CD8-positive, alpha-beta T cell (primary cell): ENCODE measurements at regions of chr11 and their contacts with region 1.

Region 1: DNA sequence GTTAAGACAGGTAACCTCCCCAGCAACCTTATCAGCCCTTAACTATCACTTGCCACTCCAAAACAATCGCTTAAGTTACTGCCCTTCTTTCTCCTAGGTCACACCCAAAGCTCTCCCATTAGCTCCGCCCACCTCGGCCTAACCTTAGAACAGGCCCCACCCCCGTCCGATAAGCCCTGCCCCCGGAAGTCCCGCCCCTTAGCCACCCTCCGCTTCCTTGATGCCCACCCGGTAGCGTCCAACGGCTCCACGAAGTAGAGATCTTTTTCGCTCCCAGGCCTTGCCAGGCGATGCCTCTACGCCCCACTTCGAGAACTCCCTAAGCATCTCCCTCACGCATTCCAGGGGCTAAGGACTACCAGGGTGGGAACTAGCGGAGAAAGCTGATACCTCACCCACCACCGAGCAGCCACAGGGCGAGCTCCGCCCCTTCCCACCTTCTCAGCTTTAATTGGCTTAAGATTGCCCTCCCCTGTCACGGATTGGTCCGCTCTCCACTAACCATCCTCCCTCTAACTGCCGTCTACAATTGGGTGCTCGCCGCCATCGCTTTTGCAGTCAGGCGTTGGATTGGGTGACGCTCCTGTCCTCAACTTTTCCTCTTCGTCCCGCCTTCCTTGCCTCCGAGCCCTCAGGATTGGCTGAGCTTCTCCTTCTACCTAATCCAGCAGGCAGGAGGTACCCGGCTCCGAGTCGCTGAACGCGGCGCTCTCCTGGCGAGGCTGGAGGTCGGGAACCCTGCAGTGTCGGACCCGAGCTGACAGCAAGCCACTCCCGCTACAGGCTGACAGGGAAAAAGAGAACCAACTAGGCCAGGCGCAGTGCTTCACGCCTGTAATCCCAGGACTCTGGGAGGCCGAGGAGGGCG is at the start of gene ZBTB3:
- DNase-seq: peak; percentile 93 to 100 (median 96)
- ATAC-seq: peak; percentile 93
- H3K4me3 ChIP-seq: peak within 1 kb of the TSS; percentile 72 to 88
- H3K4me3 Mint-ChIP-seq: peak within 1 kb of the TSS; percentile 99
- H3K27ac ChIP-seq: peak within 1 kb of the TSS; percentile 64 to 91
- H3K27ac Mint-ChIP-seq: peak within 1 kb of the TSS; percentile 98
- H3K4me1 ChIP-seq: peaks cover 28% of the 10 kb centered on the region
- H3K4me1 Mint-ChIP-seq: peaks cover 32% of the 10 kb centered on the region
- H3K27me3 ChIP-seq: no peaks in the 10 kb centered on the region
- H3K27me3 Mint-ChIP-seq: no peaks in the 10 kb centered on the region
- CTCF ChIP-seq: no peak
- total RNA-seq, gene ZBTB3: 3.7 to 4.8 TPM

Region 2: DNA sequence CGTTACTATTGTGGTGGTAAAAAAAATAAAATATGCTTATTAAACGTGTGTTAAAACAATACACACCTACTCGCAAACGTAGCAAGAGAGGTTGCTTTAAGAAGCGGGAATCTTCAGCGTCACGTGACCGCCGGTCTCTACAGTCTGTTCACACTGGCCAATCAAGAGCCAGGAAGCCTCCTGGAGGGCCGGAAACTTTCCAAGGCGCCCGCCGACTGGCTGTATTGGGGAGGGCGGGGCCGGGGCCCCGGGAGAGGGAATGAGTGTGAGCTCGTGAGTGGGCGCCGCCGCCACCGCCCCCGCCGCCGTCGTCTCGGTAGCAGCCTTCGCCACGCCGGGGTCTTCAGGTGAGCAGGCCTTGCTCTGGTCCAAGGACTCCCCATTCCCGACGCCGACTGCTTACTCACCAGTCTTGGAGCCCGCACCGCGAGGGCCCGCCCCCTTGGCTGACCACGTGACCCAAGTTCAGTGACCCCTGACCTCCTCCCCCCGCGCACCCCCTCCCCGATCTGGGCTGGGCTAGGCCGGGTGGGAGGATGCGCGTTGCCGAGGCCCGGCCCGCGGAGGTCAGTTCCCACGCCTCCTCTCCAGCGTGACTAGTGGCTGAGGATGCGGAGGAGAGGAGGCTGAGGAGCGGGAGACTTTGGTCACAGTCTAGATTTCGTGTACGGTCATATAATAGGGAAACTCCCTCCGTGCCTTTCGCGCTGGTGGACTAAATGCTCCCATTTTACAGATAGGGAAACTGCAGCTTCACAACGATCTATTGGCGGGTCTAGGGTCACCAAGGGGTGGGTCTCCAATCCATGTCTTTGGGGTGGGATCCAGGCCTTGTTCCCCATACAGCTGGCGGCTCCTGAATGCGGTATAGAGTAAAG is 17.4 kb after region 1 on chr11 and contains the start of gene TAF6L:
- CTCF ChIA-PET with region 1: interaction called, 4 read pairs
- POLR2A ChIA-PET with region 1: interaction called, 20 read pairs
- intact Hi-C with region 1: loop called (anchors 1 kb)
- DNase-seq: peak; percentile 74 to 93 (median 87)
- ATAC-seq: peak; percentile 83
- H3K4me3 ChIP-seq: peak within 1 kb of the TSS; percentile 66 to 78
- H3K4me3 Mint-ChIP-seq: peak within 1 kb of the TSS; percentile 91
- H3K27ac ChIP-seq: peak within 1 kb of the TSS; percentile 64 to 83
- H3K27ac Mint-ChIP-seq: peak within 1 kb of the TSS; percentile 94
- H3K4me1 ChIP-seq: peaks cover 22% of the 10 kb centered on the region
- H3K4me1 Mint-ChIP-seq: peaks cover 27% of the 10 kb centered on the region
- H3K27me3 ChIP-seq: no peaks in the 10 kb centered on the region
- H3K27me3 Mint-ChIP-seq: no peaks in the 10 kb centered on the region
- CTCF ChIP-seq: no peak
- total RNA-seq, gene TAF6L: 10.3 to 13.2 TPM